HCT116 (cell line): ENCODE measurements at regions of chr4 and their contacts with region 1.

Region 1: DNA sequence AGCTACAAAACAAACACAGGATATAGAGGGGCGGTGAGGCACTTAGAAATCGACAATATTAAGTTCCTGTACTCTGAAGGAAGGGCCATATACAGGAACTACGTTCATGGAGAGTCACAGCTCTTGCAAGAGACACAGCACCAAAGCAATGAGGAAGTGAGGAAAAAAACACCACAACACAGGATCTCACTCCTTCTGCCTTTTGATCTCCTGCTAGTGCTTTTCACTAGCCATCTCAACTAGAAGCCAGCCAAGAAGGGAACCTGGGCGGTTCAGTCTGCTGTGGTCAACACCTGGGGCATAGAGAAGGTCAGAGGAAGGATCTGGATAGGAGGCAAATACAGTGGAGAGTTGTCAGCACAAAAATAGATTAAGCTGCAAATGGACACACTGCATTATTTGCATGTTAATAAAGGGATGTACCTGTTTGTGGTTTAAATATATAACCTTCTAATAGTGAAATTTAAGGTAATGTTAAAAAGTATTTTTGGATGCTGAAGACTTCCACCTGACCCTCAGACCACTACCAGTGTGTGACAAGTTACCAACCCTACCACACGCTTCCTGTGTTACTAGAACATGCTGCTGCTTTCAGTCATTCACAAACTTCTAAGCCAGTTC is 104.6 kb downstream of the DTHD1 start:
- DNase-seq: no peak
- ATAC-seq: 0 out of 2 replicates have a peak, but pooled peaks have one; percentile 32
- H3K4me3 ChIP-seq: no peak overlapping the region
- H3K27ac ChIP-seq: no peak overlapping the region
- H3K4me1 ChIP-seq: peaks cover 0 to 21% of the 10 kb centered on the region in 2 experiments; a peak in 1 of 4 replicates
- H3K27me3 ChIP-seq: no peaks in the 10 kb centered on the region
- CTCF ChIP-seq: no peak
- POLR2A ChIP-seq: no peak
- RAD21 ChIP-seq: no peak

Region 2: GRCh38 chr4:35867057-35867456 is 519.0 kb before region 1 on chr4:
- CTCF ChIA-PET with region 1: no interaction called
- POLR2A ChIA-PET with region 1: no interaction called
- RAD21 ChIA-PET with region 1: no interaction called
- intact Hi-C with region 1: no loop called
- DNase-seq: no peak
- ATAC-seq: no peak
- H3K4me3 ChIP-seq: no peak overlapping the region
- H3K27ac ChIP-seq: no peak overlapping the region
- H3K4me1 ChIP-seq: no peaks in the 10 kb centered on the region
- H3K27me3 ChIP-seq: no peaks in the 10 kb centered on the region
- CTCF ChIP-seq: no peak; a peak in 1 of 6 replicates
- POLR2A ChIP-seq: no peak
- RAD21 ChIP-seq: no peak

Region 3: DNA sequence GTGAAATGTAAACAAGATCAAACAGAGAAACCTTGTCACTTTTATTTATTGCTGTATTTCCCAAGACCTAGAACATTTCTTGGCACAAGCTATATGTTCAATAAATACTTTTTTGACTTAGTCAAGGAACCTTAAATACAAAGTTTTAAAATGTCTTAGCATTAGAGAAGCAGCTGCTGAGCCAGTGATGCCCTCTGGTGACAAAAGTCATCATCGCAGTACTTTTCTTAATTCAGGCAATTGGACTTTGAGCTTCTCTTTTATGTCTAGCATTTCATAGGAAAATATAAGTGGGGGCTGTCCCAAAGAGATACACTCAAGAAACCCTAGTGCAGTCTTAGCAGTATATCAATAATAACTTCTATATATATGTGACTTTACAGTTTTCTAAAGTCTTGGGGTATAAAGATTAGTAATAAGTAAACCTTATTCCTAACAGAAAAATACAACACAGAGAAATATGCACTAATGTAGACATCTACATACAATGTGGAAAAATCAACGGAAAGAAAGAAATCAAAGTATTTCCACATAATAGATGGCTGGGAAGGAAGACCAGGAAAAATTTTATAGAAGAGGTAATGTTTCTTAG is 13.8 kb after region 1 on chr4:
- CTCF ChIA-PET with region 1: interaction called, 12 read pairs
- POLR2A ChIA-PET with region 1: no interaction called
- RAD21 ChIA-PET with region 1: interaction called in 1 of 2 experiments, 3 read pairs
- intact Hi-C with region 1: no loop called
- DNase-seq: no peak
- ATAC-seq: peak; percentile 65
- H3K4me3 ChIP-seq: no peak overlapping the region
- H3K27ac ChIP-seq: no peak overlapping the region
- H3K4me1 ChIP-seq: peaks cover under 1 to 9% of the 10 kb centered on the region in 2 experiments; a peak in 1 of 4 replicates
- H3K27me3 ChIP-seq: no peaks in the 10 kb centered on the region
- CTCF ChIP-seq: peak; percentile 61 to 86 (median 66); a peak in 5 of 6 replicates
- POLR2A ChIP-seq: no peak
- RAD21 ChIP-seq: peak; percentile 77